Breast epithelium (tissue), 4 donors: ENCODE measurements at regions of chr2 and their contacts with region 1.

Region 1: GRCh38 chr2:177281400-177282180 is 17.1 kb upstream of the NFE2L2 start:
- DNase-seq: no peak
- H3K4me3 ChIP-seq: no peak overlapping the region
- H3K27ac ChIP-seq: no peak overlapping the region
- H3K4me1 ChIP-seq: no peaks in the 10 kb centered on the region
- H3K27me3 ChIP-seq: no peaks in the 10 kb centered on the region
- CTCF ChIP-seq: no peak
- POLR2A ChIP-seq: no peak

Region 2: DNA sequence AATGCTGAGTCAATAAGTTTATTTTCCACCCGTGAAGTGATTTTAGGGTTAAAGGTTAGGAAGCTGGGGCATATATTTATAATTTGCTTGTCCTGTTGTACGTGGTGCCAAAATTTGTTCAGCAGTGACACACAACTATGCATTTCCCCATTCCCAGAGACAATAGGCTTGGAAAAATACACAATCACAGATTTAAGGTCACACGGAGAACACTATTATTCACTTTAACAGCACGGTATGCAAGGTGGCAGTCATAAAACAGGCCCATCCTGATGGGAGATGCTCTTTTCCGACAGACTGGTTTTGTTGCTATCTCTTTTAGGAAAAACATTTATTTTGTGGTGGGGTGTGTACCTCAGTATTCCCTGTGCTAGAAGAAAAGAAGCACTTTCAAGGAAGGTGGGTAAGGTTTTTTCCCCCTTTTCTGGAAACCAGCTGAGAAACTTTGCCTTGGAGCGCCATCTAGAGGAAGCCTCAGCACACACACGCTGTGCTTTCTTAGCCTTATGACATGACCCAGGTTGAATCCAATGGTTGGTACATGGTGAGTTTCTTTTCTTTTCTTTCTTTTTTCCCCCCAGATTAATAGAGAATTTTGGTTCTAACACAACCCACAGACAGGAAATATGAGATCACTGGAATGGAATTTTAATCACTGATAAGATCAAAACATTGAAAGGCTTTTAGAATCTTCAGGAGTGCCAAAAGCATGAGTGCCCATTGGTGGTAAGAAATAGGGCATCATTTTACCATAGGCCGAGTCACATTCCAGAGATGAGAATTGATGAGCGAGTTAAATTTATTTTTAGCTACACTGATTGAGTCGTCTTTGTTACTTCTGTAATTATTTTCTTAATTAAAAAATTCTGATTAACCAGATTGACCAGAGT is 443.1 kb after region 1 on chr2:
- intact Hi-C with region 1: loop called (anchors 5 kb)
- DNase-seq: no peak
- H3K4me3 ChIP-seq: no peak overlapping the region
- H3K27ac ChIP-seq: no peak overlapping the region
- H3K4me1 ChIP-seq: no peaks in the 10 kb centered on the region
- H3K27me3 ChIP-seq: no peaks in the 10 kb centered on the region
- CTCF ChIP-seq: peak; percentile 63 to 73 (median 70)
- POLR2A ChIP-seq: no peak